Breast epithelium (tissue), 4 donors: ENCODE measurements at regions of chr15 and their contacts with region 1.

Region 1: DNA sequence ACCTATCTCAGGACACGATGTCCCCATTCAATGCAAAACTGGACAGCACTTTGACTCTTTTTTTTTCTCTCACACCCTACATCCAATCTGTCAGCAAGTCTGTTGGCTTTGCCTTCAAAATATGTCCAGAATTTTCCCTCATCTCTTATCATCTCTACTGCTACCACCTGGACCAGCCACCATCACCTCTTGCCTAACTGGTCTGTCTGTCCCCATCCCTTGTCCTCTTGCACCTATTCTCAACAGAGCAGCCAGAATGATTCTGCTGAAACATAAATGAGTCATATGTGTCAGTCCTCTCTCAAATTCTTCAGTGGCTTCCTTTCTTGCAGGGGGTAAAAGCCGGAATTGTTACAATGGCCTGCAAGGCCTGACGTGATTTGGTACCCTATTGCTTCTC is 105.8 kb downstream of the CYP19A1 start:
- DNase-seq: no peak
- H3K4me3 ChIP-seq: no peak overlapping the region
- H3K27ac ChIP-seq: no peak overlapping the region
- H3K4me1 ChIP-seq: no peaks in the 10 kb centered on the region
- H3K27me3 ChIP-seq: no peaks in the 10 kb centered on the region
- CTCF ChIP-seq: no peak
- POLR2A ChIP-seq: no peak

Region 2: GRCh38 chr15:51172193-51172592 is 60.4 kb before region 1 on chr15:
- intact Hi-C with region 1: loop called (anchors 2 kb)
- DNase-seq: no peak
- H3K4me3 ChIP-seq: no peak overlapping the region
- H3K27ac ChIP-seq: peak overlapping the region in 1 of 2 donors; percentile 12
- H3K4me1 ChIP-seq: no peaks in the 10 kb centered on the region
- H3K27me3 ChIP-seq: no peaks in the 10 kb centered on the region
- CTCF ChIP-seq: no peak
- POLR2A ChIP-seq: no peak

Region 3: DNA sequence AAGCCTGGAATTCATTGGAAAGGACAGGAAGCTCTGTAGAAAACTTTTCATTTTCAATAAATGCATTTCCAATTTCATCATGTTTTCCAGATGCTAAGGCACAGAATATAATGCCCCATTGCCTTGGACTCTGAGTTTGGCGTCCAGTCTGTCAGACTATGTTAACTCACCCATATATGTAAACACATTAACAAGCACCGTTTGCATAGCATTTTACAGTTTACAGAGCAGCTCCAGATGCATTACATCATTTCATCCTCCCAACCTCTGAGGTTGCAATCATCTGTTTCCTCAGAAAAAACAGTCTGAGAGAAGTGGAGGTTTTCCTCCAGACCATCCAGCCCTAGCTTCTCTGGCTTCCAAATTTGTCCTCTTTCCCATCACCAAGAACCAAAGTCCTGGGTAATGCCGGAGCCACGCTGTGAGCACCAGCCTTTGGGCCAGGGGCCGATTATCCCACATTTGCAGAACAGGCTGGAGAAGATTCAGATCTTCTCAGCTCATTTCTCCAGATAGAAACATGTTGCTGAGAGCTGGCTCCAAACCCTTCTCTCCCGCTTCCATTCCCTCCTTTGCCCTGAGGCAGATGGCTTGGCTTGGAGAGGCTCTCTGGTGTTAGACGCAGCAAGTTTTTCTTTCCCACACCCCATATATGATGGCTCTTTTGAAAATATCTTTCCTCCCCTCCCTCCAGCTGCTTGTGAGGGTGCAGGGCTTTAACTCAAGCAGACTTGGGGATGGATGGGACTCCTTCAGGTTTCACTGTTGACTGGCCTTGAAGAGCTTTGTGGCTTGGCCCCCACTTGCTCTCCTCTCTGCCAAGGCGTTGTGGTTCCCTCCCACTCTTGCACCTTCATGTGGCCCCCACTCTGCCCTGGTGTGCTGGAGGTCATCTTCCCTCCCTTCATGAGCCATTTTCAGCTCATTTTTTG is 79.9 kb after region 1 on chr15:
- intact Hi-C with region 1: no loop called
- DNase-seq: no peak
- H3K4me3 ChIP-seq: no peak overlapping the region
- H3K27ac ChIP-seq: peak overlapping the region in 1 of 2 donors; percentile 72
- H3K4me1 ChIP-seq: no peaks in the 10 kb centered on the region
- H3K27me3 ChIP-seq: no peaks in the 10 kb centered on the region
- CTCF ChIP-seq: no peak
- POLR2A ChIP-seq: no peak

Region 4: GRCh38 chr15:51380999-51381795 is 148.6 kb after region 1 on chr15:
- intact Hi-C with region 1: no loop called
- DNase-seq: peak in 1 of 2 donors; percentile 21
- H3K4me3 ChIP-seq: no peak overlapping the region
- H3K27ac ChIP-seq: no peak overlapping the region
- H3K4me1 ChIP-seq: no peaks in the 10 kb centered on the region
- H3K27me3 ChIP-seq: peaks cover 0 to 4% of the 10 kb centered on the region in 2 donors
- CTCF ChIP-seq: peak; percentile 74 to 90 (median 85)
- POLR2A ChIP-seq: no peak